Activated CD4-positive, alpha-beta T cell treated with anti-CD3 and anti-CD28 coated beads for 36 hours (primary cell): ENCODE measurements at regions of chr17 and their contacts with region 1.

Region 1: DNA sequence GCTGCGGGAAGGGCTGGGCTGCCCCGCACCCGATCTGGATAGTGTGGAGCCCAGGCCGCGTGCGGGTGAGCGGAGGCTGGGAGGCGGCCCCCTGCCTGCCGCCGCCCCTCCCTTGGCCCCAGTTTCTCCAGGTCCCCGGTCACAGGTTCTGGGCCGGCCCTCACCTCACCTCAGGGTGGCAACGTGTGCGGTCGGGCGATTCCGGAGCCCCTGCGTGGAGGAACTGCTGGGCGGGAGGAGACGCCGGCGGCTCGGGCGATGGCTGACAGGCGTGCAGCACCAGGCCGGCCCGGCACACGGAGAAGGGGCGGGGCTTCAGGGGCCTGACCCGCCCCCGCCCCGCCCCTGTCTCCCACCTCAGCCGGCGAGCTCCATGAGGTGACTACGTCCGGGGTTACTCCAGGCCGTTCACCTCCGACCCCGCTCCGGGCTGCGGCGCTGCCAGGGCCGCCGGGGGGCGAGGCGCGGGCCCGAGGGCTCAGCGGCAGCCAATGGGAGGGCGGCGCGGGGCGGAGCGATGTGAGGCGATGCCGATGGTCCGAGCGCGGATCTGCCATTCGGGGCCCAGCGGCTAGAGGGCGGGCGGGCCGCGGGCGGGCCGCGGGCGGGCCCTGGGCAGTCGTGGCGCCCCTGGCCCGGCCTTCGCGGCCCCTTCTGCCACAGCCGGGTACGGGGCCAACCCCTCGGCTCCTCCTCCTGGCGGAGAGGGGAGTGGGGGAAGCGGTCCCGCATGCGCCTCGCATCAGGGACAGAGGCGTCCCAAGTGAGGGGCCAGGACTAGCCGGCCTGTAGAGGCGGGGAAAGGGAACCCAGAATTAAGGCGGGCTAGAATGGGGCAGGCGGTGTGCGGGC is 16.7 kb upstream of the C17orf78 start:
- DNase-seq: peak; percentile 96
- ATAC-seq: peak; percentile 98
- H3K4me3 Mint-ChIP-seq: peak overlapping the region; percentile 88
- H3K27ac Mint-ChIP-seq: peak overlapping the region; percentile 83
- H3K4me1 Mint-ChIP-seq: peaks cover 23% of the 10 kb centered on the region
- H3K27me3 Mint-ChIP-seq: no peaks in the 10 kb centered on the region

Region 2: GRCh38 chr17:36722121-36722902 is 636.7 kb before region 1 on chr17:
- CTCF ChIA-PET with region 1: no interaction called
- POLR2A ChIA-PET with region 1: no interaction called
- intact Hi-C with region 1: loop called in 1 of 2 experiments (anchors 1 kb)
- DNase-seq: peak; percentile 91
- ATAC-seq: peak; percentile 94
- H3K4me3 Mint-ChIP-seq: peak overlapping the region; percentile 76
- H3K27ac Mint-ChIP-seq: peak overlapping the region; percentile 98
- H3K4me1 Mint-ChIP-seq: peaks cover 46% of the 10 kb centered on the region
- H3K27me3 Mint-ChIP-seq: no peaks in the 10 kb centered on the region

Region 3: GRCh38 chr17:37327341-37328090 is 31.5 kb before region 1 on chr17:
- CTCF ChIA-PET with region 1: no interaction called
- POLR2A ChIA-PET with region 1: no interaction called
- intact Hi-C with region 1: no loop called
- DNase-seq: no peak
- ATAC-seq: no peak
- H3K4me3 Mint-ChIP-seq: no peak overlapping the region
- H3K27ac Mint-ChIP-seq: no peak overlapping the region
- H3K4me1 Mint-ChIP-seq: no peaks in the 10 kb centered on the region
- H3K27me3 Mint-ChIP-seq: no peaks in the 10 kb centered on the region

Region 4: DNA sequence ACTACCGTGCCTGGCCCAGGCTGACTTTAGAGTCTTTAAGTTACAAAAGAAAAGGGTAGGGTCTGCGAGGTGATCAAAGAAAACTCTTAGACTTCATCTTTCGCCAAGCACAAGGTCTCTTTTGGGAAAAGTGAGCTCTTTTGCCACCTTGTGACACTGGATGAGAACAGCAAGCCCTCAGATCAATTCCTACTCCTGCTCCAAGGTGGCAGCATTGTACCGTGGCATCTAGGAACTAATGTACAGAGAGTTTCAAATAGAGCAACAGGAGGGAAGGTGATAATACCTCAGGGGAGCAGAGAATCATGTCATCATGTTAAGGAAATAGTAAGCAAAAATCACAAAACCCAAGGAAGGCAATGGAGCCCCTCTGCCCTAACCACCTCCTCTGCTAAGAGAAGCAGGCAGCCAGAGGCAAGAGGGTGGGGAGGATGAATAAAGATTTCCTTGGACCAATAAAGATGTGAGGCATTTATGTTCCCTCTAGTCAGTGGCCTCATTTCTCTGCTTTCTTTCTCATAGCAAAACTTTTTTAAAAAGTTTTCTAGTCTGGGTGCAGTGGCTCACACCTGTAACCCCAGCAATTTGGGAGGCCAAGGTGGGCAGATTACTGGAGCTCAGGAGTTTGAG is 14.6 kb after region 1 on chr17:
- CTCF ChIA-PET with region 1: interaction called, 22 read pairs
- POLR2A ChIA-PET with region 1: no interaction called
- intact Hi-C with region 1: no loop called
- DNase-seq: peak; percentile 82
- ATAC-seq: peak; percentile 98
- H3K4me3 Mint-ChIP-seq: no peak overlapping the region
- H3K27ac Mint-ChIP-seq: no peak overlapping the region
- H3K4me1 Mint-ChIP-seq: peaks cover 5% of the 10 kb centered on the region
- H3K27me3 Mint-ChIP-seq: no peaks in the 10 kb centered on the region

Region 5: DNA sequence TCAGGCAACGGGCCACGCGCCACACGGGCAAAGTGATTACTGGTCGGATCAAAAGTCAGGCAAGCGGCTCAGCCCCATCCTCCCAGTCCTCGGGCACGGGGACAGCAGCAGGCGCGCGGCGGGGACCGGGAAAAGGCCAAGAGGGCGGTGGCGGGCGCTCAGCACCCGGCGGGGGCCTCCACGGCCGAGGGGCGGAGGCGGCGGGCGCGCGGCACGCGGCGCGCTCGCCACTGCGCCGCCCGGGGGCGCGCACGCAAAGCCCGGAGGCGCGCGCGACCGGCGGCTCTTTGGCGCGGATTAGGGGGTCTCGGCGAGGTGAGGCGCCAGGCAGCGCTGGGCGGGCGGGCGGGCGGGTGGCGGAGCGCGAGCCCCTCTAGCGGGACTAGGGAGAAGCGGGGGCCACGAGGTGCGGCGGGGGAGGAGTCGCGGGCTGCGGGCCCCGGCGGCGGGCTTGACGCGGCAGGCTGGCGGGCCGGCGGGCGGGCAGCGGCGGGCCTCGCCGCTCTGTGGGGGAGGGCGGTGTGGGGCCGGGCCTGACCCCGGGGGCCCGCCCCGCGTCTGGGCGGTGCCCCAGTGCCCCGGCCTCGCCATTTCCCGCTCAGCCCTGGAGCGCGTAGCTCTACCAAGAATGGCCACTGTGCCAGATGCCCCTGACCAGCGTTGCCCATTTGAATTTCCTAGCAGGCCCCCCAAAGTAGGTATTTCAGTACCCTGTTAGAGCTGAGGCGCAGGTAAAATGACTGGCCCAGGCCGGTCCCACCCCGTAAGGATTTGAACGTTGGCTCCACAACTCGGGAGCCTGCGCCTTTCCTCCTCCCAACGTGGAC is 47.8 kb after region 1 on chr17 and contains the starts of genes ACACA and TADA2A:
- CTCF ChIA-PET with region 1: interaction called, 3 read pairs
- POLR2A ChIA-PET with region 1: interaction called, 4 read pairs
- intact Hi-C with region 1: loop called (anchors 1 to 2 kb)
- DNase-seq: peak; percentile 88
- ATAC-seq: peak; percentile 93
- H3K4me3 Mint-ChIP-seq: peak within 1 kb of the TSS; percentile 99
- H3K27ac Mint-ChIP-seq: peak within 1 kb of the TSS; percentile 98
- H3K4me1 Mint-ChIP-seq: peaks cover 46% of the 10 kb centered on the region
- H3K27me3 Mint-ChIP-seq: no peaks in the 10 kb centered on the region
- total RNA-seq, gene ACACA: 57.2 to 61.1 TPM
- total RNA-seq, gene TADA2A: 29.9 to 32.9 TPM